ENCODE measurements at regions of chr10 and their contacts with region 1.

Region 1: DNA sequence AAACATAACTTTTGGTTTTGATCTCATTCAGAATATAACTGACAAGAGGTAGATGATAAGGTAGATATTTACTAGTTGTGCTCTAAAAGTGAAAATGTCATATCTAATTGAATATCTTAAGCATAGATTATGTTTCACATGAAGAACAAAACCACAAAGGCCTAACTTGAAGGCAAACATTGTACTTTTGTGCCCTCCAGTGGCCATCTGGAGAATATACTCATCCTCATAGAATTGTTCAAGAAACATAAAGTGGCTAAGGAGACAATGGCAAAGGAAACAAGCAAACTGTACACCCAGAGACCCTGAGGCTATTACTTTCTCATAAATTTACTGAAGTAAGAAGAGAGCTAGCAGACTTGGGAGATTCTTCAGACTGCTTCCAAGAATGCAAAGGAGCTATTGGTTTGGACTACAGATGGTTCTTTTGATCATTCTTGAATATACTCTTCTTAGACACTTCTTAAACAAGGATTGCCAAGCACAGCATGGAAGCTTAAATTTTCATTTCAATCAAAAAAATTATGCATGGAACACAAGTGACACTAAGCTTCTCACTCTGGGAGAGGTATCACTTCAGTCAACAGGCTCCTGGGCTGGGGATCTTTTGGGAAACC is 98.2 kb upstream of the DKK1 start:
- DNase-seq: peak; percentile 48
- H3K4me3 ChIP-seq: no peak overlapping the region
- H3K27ac ChIP-seq: peak overlapping the region in 1 of 4 donors; percentile 38
- H3K4me1 ChIP-seq: peaks cover 0 to 32% (median 14%) of the 10 kb centered on the region in 4 donors
- H3K27me3 ChIP-seq: no peaks in the 10 kb centered on the region
- CTCF ChIP-seq: peak; percentile 69 to 80 (median 80)
- EP300 ChIP-seq: no peak
- POLR2A ChIP-seq: no peak

Region 2: DNA sequence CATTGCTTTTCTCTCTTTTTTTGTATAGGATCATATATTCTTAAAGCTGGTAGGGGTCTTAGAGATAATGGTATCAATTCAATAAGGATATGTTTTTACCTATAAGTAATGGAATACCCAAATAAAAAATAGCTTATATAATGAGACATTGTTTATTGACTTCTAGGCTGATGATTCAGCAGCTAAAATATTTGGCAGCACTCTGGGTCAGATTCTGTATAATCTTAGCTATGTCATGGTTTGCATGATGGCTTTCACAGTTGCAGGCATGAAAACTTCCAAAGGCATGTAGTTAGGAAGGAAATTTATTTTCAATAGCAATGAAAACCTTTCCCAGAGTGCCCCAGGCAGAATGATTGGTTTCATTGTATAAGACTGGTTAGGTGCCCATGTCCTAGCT is 1298.4 kb before region 1 on chr10:
- in situ Hi-C with region 1: no loop called
- intact Hi-C with region 1: no loop called
- DNase-seq: no peak
- H3K4me3 ChIP-seq: no peak overlapping the region
- H3K27ac ChIP-seq: no peak overlapping the region
- H3K4me1 ChIP-seq: no peaks in the 10 kb centered on the region
- H3K27me3 ChIP-seq: no peaks in the 10 kb centered on the region
- CTCF ChIP-seq: no peak
- EP300 ChIP-seq: no peak
- POLR2A ChIP-seq: no peak

Region 3: GRCh38 chr10:50990568-50991185 is 1225.2 kb before region 1 on chr10:
- in situ Hi-C with region 1: loop called in 1 of 4 experiments (anchors 10 kb)
- intact Hi-C with region 1: loop called (anchors 10 kb)
- DNase-seq: peak; percentile 61
- H3K4me3 ChIP-seq: peak overlapping the region; percentile 18 to 89 (median 66)
- H3K27ac ChIP-seq: peak overlapping the region; percentile 83 to 89 (median 88)
- H3K4me1 ChIP-seq: peaks cover 0 to 46% (median 36%) of the 10 kb centered on the region in 4 donors
- H3K27me3 ChIP-seq: no peaks in the 10 kb centered on the region
- CTCF ChIP-seq: no peak
- EP300 ChIP-seq: no peak
- POLR2A ChIP-seq: no peak

Region 4: GRCh38 chr10:51010977-51011376 is 1204.9 kb before region 1 on chr10:
- in situ Hi-C with region 1: loop called in 3 of 4 experiments (anchors 25 kb)
- intact Hi-C with region 1: no loop called
- DNase-seq: no peak
- H3K4me3 ChIP-seq: no peak overlapping the region
- H3K27ac ChIP-seq: no peak overlapping the region
- H3K4me1 ChIP-seq: peaks cover 0 to 8% (median 0%) of the 10 kb centered on the region in 4 donors
- H3K27me3 ChIP-seq: no peaks in the 10 kb centered on the region
- CTCF ChIP-seq: peak; percentile 69 to 87 (median 80)
- EP300 ChIP-seq: no peak
- POLR2A ChIP-seq: no peak

Region 5: GRCh38 chr10:51348622-51349021 is 867.2 kb before region 1 on chr10:
- in situ Hi-C with region 1: no loop called
- intact Hi-C with region 1: no loop called
- DNase-seq: no peak
- H3K4me3 ChIP-seq: no peak overlapping the region
- H3K27ac ChIP-seq: no peak overlapping the region
- H3K4me1 ChIP-seq: no peaks in the 10 kb centered on the region
- H3K27me3 ChIP-seq: no peaks in the 10 kb centered on the region
- CTCF ChIP-seq: no peak
- EP300 ChIP-seq: no peak
- POLR2A ChIP-seq: no peak

Measured in transverse colon (tissue), 4 donors.